HCT116 (cell line): ENCODE measurements at regions of chr3 and their contacts with region 1.

Region 1: GRCh38 chr3:10945683-10946287 is 46.8 kb upstream of the SLC6A1 start:
- DNase-seq: peak; percentile 44
- ATAC-seq: peak; percentile 99
- H3K4me3 ChIP-seq: no peak overlapping the region
- H3K27ac ChIP-seq: no peak overlapping the region
- H3K4me1 ChIP-seq: no peaks in the 10 kb centered on the region
- H3K27me3 ChIP-seq: no peaks in the 10 kb centered on the region; the same call in 1 of the 2 replicates
- CTCF ChIP-seq: peak; percentile 79 to 96 (median 88)
- POLR2A ChIP-seq: no peak
- RAD21 ChIP-seq: peak; percentile 83

Region 2: GRCh38 chr3:10758304-10759061 is 187.3 kb before region 1 on chr3:
- CTCF ChIA-PET with region 1: interaction called, 6 read pairs
- POLR2A ChIA-PET with region 1: no interaction called
- RAD21 ChIA-PET with region 1: no interaction called
- intact Hi-C with region 1: loop called (anchors 2 kb)
- DNase-seq: peak; percentile 51
- ATAC-seq: peak; percentile 97
- H3K4me3 ChIP-seq: no peak overlapping the region
- H3K27ac ChIP-seq: no peak overlapping the region
- H3K4me1 ChIP-seq: no peaks in the 10 kb centered on the region
- H3K27me3 ChIP-seq: peaks cover 37% of the 10 kb centered on the region
- CTCF ChIP-seq: peak; percentile 48 to 94 (median 64); a peak in 5 of 6 replicates
- POLR2A ChIP-seq: no peak
- RAD21 ChIP-seq: peak; percentile 93

Region 3: GRCh38 chr3:10983219-10983916 is 37.6 kb after region 1 on chr3:
- CTCF ChIA-PET with region 1: interaction called, 5 read pairs
- POLR2A ChIA-PET with region 1: no interaction called
- RAD21 ChIA-PET with region 1: no interaction called
- intact Hi-C with region 1: loop called (anchors 2 kb)
- DNase-seq: peak; percentile 50
- ATAC-seq: peak; percentile 93
- H3K4me3 ChIP-seq: no peak overlapping the region
- H3K27ac ChIP-seq: no peak overlapping the region
- H3K4me1 ChIP-seq: peaks cover 6 to 13% of the 10 kb centered on the region in 2 experiments
- H3K27me3 ChIP-seq: peaks cover 59% of the 10 kb centered on the region
- CTCF ChIP-seq: peak; percentile 64 to 88 (median 85); a peak in 5 of 6 replicates
- POLR2A ChIP-seq: no peak
- RAD21 ChIP-seq: peak; percentile 42; the same call in 1 of the 2 replicates